ENCODE measurements at regions of chr5 and their contacts with region 1.

Region 1: DNA sequence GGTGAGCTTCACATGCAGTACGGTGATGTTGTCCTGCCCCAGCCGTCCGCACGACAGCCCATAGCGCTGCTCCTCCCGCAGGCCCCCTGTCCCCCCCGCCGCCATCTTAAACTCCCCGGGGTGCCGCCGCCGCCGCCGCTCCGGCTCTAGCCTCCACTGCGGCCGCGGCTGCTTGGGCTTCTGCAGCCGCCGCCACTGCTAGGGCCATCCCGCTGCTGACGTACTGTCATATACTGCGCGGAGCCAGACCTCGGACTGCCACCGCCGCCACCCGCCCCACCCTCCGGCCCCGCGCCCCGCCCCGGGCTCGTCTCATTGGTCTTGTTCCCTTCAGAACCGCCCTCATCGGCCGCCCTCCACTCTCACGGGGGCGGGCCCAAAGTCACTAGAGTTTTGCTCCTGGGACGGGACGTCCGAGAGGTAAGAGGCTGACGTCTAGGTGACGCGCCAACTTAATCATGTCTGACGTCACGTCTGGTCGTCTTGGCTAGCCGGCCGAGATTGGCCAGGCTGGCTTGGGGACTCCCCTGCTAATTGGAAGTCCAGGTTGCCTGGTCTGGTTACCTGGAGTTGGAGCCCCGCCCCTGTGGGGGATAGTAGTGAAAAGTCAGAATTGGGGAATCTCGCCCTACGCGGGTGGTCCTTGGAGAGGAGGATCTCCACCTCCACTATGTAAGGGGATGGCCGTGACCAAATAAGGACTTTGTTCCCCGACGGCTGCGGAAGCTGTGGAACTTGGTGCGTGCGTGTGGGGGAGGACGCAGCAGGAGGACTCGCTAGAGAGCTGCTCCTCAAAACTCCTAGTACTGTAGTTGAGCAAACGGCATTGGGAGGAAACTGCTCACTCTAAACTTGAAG is at the start of gene ELL2:
- DNase-seq: peak; percentile 97
- ATAC-seq: peak; percentile 90 to 96 (median 94)
- H3K4me3 ChIP-seq: peak within 1 kb of the TSS; percentile 71 to 96 (median 88)
- H3K27ac ChIP-seq: peak within 1 kb of the TSS; percentile 90 to 100 (median 98)
- H3K4me1 ChIP-seq: peaks cover 0 to 43% (median 32%) of the 10 kb centered on the region in 9 donors
- H3K27me3 ChIP-seq: no peaks in the 10 kb centered on the region
- CTCF ChIP-seq: no peak
- total RNA-seq, gene ELL2: 19.2 to 68.2 (median 27.2) TPM

Region 2: GRCh38 chr5:95646554-95647431 is 315.1 kb before region 1 on chr5 and contains the start of gene RFESD:
- intact Hi-C with region 1: loop called in 1 of 10 experiments (anchors 5 kb)
- DNase-seq: peak; percentile 97 to 99
- ATAC-seq: peak; percentile 98 to 100 (median 99)
- H3K4me3 ChIP-seq: peak within 1 kb of the TSS; percentile 37 to 83 (median 60)
- H3K27ac ChIP-seq: peak within 1 kb of the TSS; percentile 88 to 94 (median 91)
- H3K4me1 ChIP-seq: peaks cover 0 to 17% (median 9%) of the 10 kb centered on the region in 9 donors
- H3K27me3 ChIP-seq: no peaks in the 10 kb centered on the region
- CTCF ChIP-seq: peak in 5 of 9 donors; percentile 10 to 32 (median 16)
- total RNA-seq, gene RFESD: 2.4 to 5.3 (median 3.8) TPM

Region 3: DNA sequence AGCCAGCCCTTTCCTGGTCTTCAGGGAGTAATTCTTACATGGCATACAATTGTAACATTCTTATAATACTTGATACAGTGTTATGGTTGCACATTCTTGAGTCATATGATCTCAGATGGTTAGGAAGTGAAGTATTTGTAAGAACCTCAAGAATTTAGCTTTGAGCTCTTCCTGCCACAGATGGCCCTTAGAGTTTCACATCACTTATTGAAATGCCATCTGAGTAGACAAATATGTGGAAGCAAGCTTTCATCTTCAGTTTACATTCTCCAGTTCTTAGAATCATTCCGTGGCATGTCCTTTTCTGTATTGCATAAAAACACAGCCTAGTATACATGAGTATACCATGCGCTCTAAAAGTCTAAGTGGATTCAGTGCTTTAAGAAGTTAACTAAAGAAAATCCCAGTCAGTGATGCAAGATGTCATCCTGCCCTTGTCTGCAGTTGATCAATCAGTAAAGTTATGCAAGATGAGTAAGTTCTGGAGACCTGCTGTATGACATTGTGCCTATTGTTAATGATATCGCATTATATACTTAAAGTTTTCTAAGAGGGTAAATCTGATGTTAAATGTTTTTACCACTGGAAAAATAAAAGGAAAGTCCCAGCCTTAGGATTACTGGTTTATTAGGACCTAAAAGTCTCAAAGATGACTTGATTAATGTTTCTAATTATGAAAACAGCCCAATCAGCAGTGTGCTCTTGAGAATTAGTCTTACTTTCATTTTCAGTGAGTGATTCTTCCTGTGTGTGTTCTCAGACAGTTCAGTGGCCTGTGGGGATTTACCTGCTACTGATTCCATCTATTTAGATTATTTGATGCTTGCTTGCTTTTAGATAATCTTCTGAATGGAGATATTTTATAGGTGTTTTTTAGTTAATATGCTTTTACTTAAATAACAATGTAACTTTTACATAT is 201.3 kb before region 1 on chr5:
- intact Hi-C with region 1: no loop called
- DNase-seq: no peak
- ATAC-seq: peak in 7 of 8 donors; percentile 33 to 73 (median 53)
- H3K4me3 ChIP-seq: peak overlapping the region in 3 of 10 donors; percentile 0 to 25 (median 15)
- H3K27ac ChIP-seq: peak overlapping the region in 5 of 10 donors; percentile 2 to 60 (median 32)
- H3K4me1 ChIP-seq: peaks cover 7 to 44% (median 24%) of the 10 kb centered on the region in 9 donors
- H3K27me3 ChIP-seq: no peaks in the 10 kb centered on the region
- CTCF ChIP-seq: no peak

Region 4: DNA sequence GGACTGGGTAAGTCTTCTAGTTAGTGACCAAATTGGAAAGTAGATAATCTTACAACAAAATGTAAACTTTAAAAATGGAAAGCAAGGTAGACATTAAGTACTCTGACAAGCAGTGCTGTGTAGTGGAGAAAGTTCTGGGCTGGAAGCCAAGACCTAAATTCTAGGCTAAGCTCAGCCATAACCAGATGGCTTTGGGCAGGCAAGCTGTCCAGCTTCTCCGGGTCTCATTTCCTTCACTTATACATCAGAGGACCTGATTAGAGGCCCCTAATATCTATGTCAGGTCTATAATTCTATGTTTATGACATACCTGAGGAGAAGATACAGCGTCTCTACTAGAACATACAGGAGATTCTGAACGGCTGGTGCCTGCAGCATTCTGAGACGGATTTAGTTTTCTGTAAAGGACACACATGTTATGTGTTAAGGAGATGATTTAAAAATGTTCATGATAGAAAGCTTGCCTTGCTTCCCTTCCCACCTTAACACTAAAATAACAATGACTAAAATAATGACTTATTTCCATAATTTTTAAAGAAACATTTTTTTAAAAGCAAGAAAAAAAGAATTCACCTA is 61.4 kb before region 1 on chr5:
- intact Hi-C with region 1: loop called in 3 of 10 experiments (anchors 5 kb)
- DNase-seq: peak in 1 of 2 donors; percentile 69
- ATAC-seq: peak; percentile 69 to 93 (median 87)
- H3K4me3 ChIP-seq: no peak overlapping the region
- H3K27ac ChIP-seq: peak overlapping the region in 7 of 10 donors; percentile 5 to 63 (median 46)
- H3K4me1 ChIP-seq: peaks cover 0 to 30% (median 14%) of the 10 kb centered on the region in 9 donors
- H3K27me3 ChIP-seq: no peaks in the 10 kb centered on the region
- CTCF ChIP-seq: no peak

Region 5: GRCh38 chr5:95927927-95928723 is 33.7 kb before region 1 on chr5:
- intact Hi-C with region 1: no loop called
- DNase-seq: no peak
- ATAC-seq: no peak
- H3K4me3 ChIP-seq: no peak overlapping the region
- H3K27ac ChIP-seq: peak overlapping the region in 1 of 10 donors; percentile 15
- H3K4me1 ChIP-seq: peaks cover 0 to 61% (median 13%) of the 10 kb centered on the region in 9 donors
- H3K27me3 ChIP-seq: no peaks in the 10 kb centered on the region
- CTCF ChIP-seq: no peak

Region 6: GRCh38 chr5:95989283-95990041 is 27.6 kb after region 1 on chr5:
- intact Hi-C with region 1: no loop called
- DNase-seq: no peak
- ATAC-seq: peak in 1 of 8 donors; percentile 62
- H3K4me3 ChIP-seq: no peak overlapping the region
- H3K27ac ChIP-seq: no peak overlapping the region
- H3K4me1 ChIP-seq: peaks cover 0 to 30% (median 12%) of the 10 kb centered on the region in 9 donors
- H3K27me3 ChIP-seq: no peaks in the 10 kb centered on the region
- CTCF ChIP-seq: no peak

Region 7: GRCh38 chr5:96235008-96235910 is 273.4 kb after region 1 on chr5:
- intact Hi-C with region 1: loop called in 2 of 10 experiments (anchors 10 kb)
- DNase-seq: no peak
- ATAC-seq: peak; percentile 91 to 98 (median 96)
- H3K4me3 ChIP-seq: peak overlapping the region in 1 of 10 donors; percentile 3
- H3K27ac ChIP-seq: peak overlapping the region; percentile 59 to 92 (median 77)
- H3K4me1 ChIP-seq: peaks cover 0 to 25% (median 17%) of the 10 kb centered on the region in 9 donors
- H3K27me3 ChIP-seq: no peaks in the 10 kb centered on the region
- CTCF ChIP-seq: no peak

Region 8: GRCh38 chr5:96256778-96257470 is 295.1 kb after region 1 on chr5:
- intact Hi-C with region 1: loop called in 2 of 10 experiments (anchors 10 kb)
- DNase-seq: no peak
- ATAC-seq: peak in 5 of 8 donors; percentile 24 to 53 (median 45)
- H3K4me3 ChIP-seq: no peak overlapping the region
- H3K27ac ChIP-seq: no peak overlapping the region
- H3K4me1 ChIP-seq: peaks cover 0 to 40% (median 10%) of the 10 kb centered on the region in 9 donors
- H3K27me3 ChIP-seq: no peaks in the 10 kb centered on the region
- CTCF ChIP-seq: no peak

Region 9: DNA sequence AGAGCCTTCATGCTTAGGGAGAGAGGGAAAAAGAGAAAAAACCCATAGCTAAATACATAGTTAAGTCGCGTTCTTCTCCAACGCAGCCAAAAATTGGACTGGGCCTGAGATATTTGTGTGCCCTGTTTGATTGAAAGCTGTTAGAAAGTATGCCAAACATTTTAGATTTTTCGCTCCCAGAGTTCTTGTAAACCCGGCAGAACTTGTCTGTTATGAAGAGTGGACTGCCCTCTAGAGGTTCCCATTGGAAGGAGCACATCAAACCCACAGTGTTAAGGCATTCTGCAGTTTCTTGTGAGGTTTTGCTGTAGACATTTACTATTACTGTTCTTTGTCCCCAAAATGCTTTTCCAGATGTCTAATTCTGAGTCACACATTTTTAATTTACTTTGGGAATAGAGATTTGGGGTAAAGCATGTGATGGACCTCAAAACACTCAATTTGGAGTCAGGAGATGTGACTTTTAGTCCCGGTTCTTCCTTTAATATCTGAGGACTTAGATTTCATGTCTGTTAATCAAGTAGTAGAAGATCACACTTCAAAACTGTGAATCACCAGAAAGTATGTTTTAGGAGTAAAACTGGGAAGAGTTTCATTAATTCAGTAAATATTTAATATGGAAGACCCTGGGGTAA is 374.6 kb after region 1 on chr5:
- intact Hi-C with region 1: loop called in 9 of 10 experiments (anchors 1 to 10 kb)
- DNase-seq: peak in 1 of 2 donors; percentile 78
- ATAC-seq: peak; percentile 61 to 92 (median 80)
- H3K4me3 ChIP-seq: peak overlapping the region in 2 of 10 donors; percentile 8 to 10
- H3K27ac ChIP-seq: peak overlapping the region in 8 of 10 donors; percentile 33 to 68 (median 50)
- H3K4me1 ChIP-seq: peaks cover 0 to 56% (median 15%) of the 10 kb centered on the region in 9 donors
- H3K27me3 ChIP-seq: no peaks in the 10 kb centered on the region
- CTCF ChIP-seq: peak; percentile 62 to 93 (median 88)